ENCODE measurements at regions of chr4 and their contacts with region 1.

Region 1: DNA sequence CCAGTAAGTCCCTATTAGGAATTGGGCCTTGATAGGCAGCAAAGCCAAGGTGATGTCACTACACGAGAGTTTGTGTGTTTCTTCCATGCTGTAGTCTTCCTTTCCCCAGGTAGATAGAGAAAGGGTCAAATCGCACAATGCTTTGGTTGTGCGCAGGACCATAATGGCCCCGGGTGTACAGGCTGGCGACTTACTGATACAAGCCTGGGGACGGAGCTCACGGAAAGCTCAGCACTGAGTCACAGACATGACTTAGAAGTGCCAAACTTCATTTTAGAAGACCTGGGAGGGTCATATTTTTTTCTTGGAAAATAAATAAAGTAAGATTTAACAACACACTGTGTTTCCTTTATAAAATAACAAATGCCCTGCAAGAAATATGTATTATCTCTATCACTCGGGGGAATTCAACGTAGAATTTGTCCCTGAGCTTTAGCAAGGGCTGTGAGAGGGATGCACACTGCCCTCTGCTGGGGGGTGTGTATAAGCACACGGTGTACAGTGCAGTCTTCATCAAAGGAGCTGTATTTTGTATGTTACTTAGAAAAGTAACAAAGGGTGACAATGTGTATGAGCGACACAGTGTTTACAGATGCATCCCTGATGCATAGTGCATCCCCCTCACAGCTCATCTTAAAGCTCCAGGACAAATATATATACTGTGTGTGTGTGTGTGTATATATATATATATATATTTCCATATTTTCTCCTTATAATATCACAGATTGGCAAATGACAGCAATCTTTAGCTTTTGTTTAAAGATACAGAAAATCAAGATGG is 254.5 kb upstream of the VEGFC start:
- DNase-seq: peak; percentile 79
- H3K4me3 ChIP-seq: no peak overlapping the region
- H3K27ac ChIP-seq: no peak overlapping the region
- H3K4me1 ChIP-seq: no peaks in the 10 kb centered on the region
- H3K27me3 ChIP-seq: peaks cover 24% of the 10 kb centered on the region
- CTCF ChIP-seq: peak; percentile 85

Region 2: DNA sequence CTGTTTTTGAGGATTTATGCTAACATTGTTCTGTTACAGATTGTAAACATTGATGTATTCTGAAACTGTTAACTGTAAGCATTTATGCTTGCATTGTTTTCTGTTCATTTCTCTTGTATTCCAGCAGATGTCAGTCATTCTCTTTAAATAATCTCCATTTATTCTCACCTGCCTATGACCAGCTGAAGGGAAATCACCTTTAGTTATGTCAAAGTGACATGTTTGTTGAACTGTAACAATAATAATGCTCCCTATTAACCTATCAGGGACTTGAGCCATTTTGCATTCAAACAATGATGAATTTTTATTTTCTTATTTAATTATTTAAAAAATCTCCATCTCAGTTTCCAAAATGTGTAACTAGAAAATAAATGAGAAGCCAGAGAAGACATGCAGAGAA is 669.5 kb before region 1 on chr4:
- CTCF ChIA-PET with region 1: interaction called, 11 read pairs
- POLR2A ChIA-PET with region 1: no interaction called
- intact Hi-C with region 1: loop called (anchors 1 kb)
- DNase-seq: peak; percentile 6
- H3K4me3 ChIP-seq: no peak overlapping the region
- H3K27ac ChIP-seq: no peak overlapping the region
- H3K4me1 ChIP-seq: no peaks in the 10 kb centered on the region
- H3K27me3 ChIP-seq: peaks cover 9% of the 10 kb centered on the region
- CTCF ChIP-seq: peak; percentile 52

Region 3: GRCh38 chr4:176563591-176563990 is 483.7 kb before region 1 on chr4:
- CTCF ChIA-PET with region 1: interaction called, 20 read pairs
- POLR2A ChIA-PET with region 1: no interaction called
- intact Hi-C with region 1: loop called (anchors 5 kb)
- DNase-seq: peak; percentile 32
- H3K4me3 ChIP-seq: no peak overlapping the region
- H3K27ac ChIP-seq: no peak overlapping the region
- H3K4me1 ChIP-seq: peaks cover 5% of the 10 kb centered on the region
- H3K27me3 ChIP-seq: peaks cover 44% of the 10 kb centered on the region
- CTCF ChIP-seq: peak; percentile 42; the same call in 1 of the 2 replicates

Region 4: DNA sequence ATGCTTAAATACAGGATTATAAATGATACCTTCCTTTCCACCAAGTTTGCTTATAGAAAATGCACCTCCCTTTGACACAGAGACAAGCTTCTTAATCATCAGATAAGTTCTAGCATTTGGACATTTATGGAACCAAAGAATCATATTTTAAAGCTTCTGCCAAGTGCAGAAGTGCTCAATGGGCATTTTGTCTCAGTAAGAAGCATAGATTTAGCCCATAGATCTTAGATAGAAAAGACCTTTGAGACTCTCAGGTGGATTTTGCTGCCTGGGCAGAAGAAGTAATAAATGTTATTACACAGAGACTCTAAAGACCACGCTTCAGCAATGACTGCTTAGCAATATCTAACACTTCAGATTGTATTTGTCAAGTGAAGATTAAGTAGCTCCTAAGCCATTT is 429.1 kb before region 1 on chr4:
- CTCF ChIA-PET with region 1: interaction called, 10 read pairs
- POLR2A ChIA-PET with region 1: no interaction called
- intact Hi-C with region 1: no loop called
- DNase-seq: no peak
- H3K4me3 ChIP-seq: no peak overlapping the region
- H3K27ac ChIP-seq: no peak overlapping the region
- H3K4me1 ChIP-seq: no peaks in the 10 kb centered on the region
- H3K27me3 ChIP-seq: peaks cover 3% of the 10 kb centered on the region
- CTCF ChIP-seq: no peak

Region 5: DNA sequence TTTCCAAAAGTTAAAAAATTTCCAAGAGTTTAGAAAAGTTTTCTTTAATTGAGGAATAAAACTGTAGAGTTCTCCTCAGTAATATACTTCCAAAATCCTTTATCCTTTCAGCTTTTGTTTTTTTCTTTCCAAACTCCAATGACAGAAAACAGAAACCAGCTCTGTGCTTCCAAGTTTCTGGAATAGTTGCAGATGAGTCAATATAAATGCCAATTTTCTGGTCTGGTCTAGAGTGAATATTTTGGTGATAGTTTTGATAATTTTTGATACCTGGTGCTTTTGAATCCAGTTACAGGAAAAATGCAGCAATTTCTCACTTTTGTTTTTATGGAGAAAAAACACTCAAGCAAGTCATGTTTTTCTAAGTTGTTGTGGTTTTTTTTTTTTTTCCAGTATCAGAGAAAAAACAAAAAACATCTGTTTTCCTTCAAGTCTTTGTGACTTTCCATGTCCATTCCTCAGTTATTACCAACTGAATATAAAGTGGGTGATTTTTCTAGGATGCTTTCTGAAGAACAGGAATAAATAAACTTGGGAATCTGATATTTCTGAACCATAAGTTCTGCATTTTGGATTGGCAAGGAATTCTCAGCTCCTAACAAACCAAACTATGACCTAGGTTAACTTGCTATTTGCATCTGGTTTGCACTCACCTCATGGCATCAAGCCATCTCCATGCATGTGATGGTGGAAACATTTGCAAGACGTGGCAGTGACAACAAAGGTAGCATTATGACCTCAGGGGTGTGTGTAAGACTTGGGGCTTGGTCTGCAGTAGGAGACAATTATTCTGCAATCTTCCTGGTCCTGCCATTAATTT is 393.6 kb before region 1 on chr4:
- CTCF ChIA-PET with region 1: interaction called, 3 read pairs
- POLR2A ChIA-PET with region 1: no interaction called
- intact Hi-C with region 1: loop called (anchors 5 kb)
- DNase-seq: no peak
- H3K4me3 ChIP-seq: no peak overlapping the region
- H3K27ac ChIP-seq: no peak overlapping the region
- H3K4me1 ChIP-seq: no peaks in the 10 kb centered on the region
- H3K27me3 ChIP-seq: peaks cover 8% of the 10 kb centered on the region
- CTCF ChIP-seq: no peak

Region 6: GRCh38 chr4:176789955-176790354 is 257.3 kb before region 1 on chr4:
- CTCF ChIA-PET with region 1: interaction called, 4 read pairs
- POLR2A ChIA-PET with region 1: no interaction called
- intact Hi-C with region 1: loop called (anchors 1 kb)
- DNase-seq: peak; percentile 72
- H3K4me3 ChIP-seq: no peak overlapping the region
- H3K27ac ChIP-seq: no peak overlapping the region
- H3K4me1 ChIP-seq: no peaks in the 10 kb centered on the region
- H3K27me3 ChIP-seq: peaks cover 76% of the 10 kb centered on the region
- CTCF ChIP-seq: peak; percentile 70

Region 7: DNA sequence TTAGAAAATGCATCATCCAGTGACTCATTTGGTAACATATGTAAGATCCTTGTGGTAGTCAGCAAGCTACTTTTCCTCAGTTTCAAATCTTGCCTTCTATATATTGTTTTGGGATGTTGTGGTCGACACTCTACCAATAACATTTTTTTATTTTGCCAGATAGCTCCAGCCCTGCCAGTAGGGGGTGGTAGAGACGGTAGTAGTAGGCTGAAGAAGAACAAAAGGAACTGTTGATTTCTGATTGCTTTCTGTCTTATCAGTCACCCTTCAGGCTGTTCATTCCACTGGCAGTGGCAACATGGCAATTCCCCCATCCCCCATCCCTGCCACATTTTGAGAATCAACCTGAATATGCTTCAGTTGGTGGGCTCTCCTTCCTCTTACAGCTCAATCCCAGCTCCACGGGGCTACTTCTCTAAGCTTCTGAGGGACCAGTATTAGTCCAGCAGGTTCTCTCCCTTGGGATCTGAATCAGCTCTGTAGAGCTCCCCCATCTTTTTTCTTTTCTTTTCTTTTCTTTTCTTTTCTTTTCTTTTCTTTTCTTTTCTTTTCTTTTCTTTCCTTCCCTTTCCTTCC is 83.1 kb before region 1 on chr4:
- CTCF ChIA-PET with region 1: interaction called, 4 read pairs
- POLR2A ChIA-PET with region 1: no interaction called
- intact Hi-C with region 1: loop called (anchors 2 kb)
- DNase-seq: peak; percentile 21
- H3K4me3 ChIP-seq: no peak overlapping the region
- H3K27ac ChIP-seq: no peak overlapping the region
- H3K4me1 ChIP-seq: no peaks in the 10 kb centered on the region
- H3K27me3 ChIP-seq: peaks cover 53% of the 10 kb centered on the region
- CTCF ChIP-seq: peak; percentile 52